CD4-positive, alpha-beta T cell (primary cell): ENCODE measurements at regions of chr3 and their contacts with region 1.

Region 1: GRCh38 chr3:49411968-49412631 is at the starts of genes RHOA and TCTA:
- DNase-seq: peak; percentile 97 to 100 (median 99)
- ATAC-seq: peak; percentile 84
- H3K4me3 ChIP-seq: peak within 1 kb of the TSS; percentile 75
- H3K4me3 Mint-ChIP-seq: peak within 1 kb of the TSS; percentile 96
- H3K27ac ChIP-seq: peak within 1 kb of the TSS; percentile 94 to 95
- H3K27ac Mint-ChIP-seq: peak within 1 kb of the TSS; percentile 97
- H3K4me1 ChIP-seq: peaks cover 75% of the 10 kb centered on the region
- H3K4me1 Mint-ChIP-seq: peaks cover 70% of the 10 kb centered on the region
- H3K27me3 ChIP-seq: no peaks in the 10 kb centered on the region
- H3K27me3 Mint-ChIP-seq: no peaks in the 10 kb centered on the region
- CTCF ChIP-seq: no peak
- total RNA-seq, gene RHOA: 256 to 271 TPM
- total RNA-seq, gene TCTA: 21.4 to 22.0 TPM

Region 2: DNA sequence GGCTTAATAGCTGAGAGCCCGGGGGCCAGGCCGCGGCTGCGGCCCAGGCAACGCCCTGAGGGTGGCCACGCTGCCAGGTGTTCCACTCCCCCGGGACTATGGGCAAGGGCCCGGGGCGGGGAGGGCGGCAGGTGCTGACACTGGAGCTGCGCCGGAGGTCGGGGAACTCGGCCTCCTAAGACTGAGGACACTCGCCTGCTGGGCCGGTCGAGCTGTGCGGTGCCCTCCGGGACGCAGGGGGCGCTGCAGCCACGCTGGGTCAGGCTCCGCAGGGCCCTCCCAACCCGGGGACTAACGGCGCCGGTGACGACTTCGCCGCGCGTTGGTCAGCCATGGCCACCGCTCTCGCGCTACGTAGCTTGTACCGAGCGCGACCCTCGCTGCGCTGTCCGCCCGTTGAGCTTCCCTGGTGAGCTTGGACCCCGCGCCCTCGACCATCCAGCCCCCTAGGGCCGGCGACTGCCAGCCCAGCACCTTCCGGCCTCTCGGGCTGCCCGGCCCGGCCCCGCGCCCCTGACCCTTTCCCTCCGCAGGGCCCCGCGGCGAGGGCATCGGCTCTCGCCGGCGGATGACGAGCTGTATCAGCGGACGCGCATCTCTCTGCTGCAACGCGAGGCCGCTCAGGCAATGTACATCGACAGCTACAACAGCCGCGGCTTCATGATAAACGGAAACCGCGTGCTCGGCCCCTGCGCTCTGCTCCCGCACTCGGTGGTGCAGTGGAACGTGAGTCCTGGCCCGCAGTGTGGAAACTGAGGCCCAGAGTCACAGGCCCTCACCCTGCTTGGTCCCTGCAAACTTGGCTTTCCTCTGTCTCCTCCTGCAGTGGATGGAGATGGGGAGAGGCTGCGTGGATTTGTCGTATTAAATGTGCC is 390.1 kb before region 1 on chr3 and contains the start of gene NDUFAF3:
- CTCF ChIA-PET with region 1: no interaction called
- POLR2A ChIA-PET with region 1: interaction called, 3 read pairs
- intact Hi-C with region 1: loop called in 1 of 2 experiments (anchors 5 kb)
- DNase-seq: peak; percentile 81 to 95 (median 90)
- ATAC-seq: peak; percentile 74
- H3K4me3 ChIP-seq: peak within 1 kb of the TSS; percentile 80
- H3K4me3 Mint-ChIP-seq: peak within 1 kb of the TSS; percentile 95
- H3K27ac ChIP-seq: peak within 1 kb of the TSS; percentile 92 to 98
- H3K27ac Mint-ChIP-seq: peak within 1 kb of the TSS; percentile 90
- H3K4me1 ChIP-seq: peaks cover 63% of the 10 kb centered on the region
- H3K4me1 Mint-ChIP-seq: peaks cover 50% of the 10 kb centered on the region
- H3K27me3 ChIP-seq: no peaks in the 10 kb centered on the region
- H3K27me3 Mint-ChIP-seq: no peaks in the 10 kb centered on the region
- CTCF ChIP-seq: peak; percentile 99
- total RNA-seq, gene NDUFAF3: 52.7 to 53.2 TPM

Region 3: DNA sequence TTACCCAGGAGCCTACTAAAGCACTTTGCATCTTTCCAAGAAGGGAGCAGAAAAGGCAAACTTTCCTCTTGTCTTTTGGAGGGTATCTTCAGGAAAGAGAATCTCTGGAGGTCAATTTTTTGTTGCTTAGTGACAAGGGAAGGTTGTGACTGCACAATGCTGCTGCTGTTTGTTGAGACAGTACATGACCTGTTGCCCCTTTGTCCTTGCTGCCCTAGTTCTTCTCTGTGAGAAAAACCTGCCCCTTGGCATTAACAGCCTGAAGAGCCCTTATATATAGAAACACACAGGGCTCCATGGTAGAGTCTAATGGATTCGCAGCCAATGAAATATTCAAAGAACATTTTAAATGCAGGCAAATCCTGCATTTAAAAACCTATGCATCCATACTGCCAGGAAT is 220.4 kb before region 1 on chr3:
- CTCF ChIA-PET with region 1: no interaction called
- POLR2A ChIA-PET with region 1: no interaction called
- intact Hi-C with region 1: no loop called
- DNase-seq: no peak
- ATAC-seq: no peak
- H3K4me3 ChIP-seq: no peak overlapping the region
- H3K4me3 Mint-ChIP-seq: no peak overlapping the region
- H3K27ac ChIP-seq: no peak overlapping the region
- H3K27ac Mint-ChIP-seq: no peak overlapping the region
- H3K4me1 ChIP-seq: no peaks in the 10 kb centered on the region
- H3K4me1 Mint-ChIP-seq: no peaks in the 10 kb centered on the region
- H3K27me3 ChIP-seq: no peaks in the 10 kb centered on the region
- H3K27me3 Mint-ChIP-seq: peaks cover 23% of the 10 kb centered on the region
- CTCF ChIP-seq: no peak

Region 4: GRCh38 chr3:49377483-49377882 is 34.6 kb before region 1 on chr3:
- CTCF ChIA-PET with region 1: no interaction called
- POLR2A ChIA-PET with region 1: interaction called, 3 read pairs
- intact Hi-C with region 1: loop called in 1 of 2 experiments (anchors 5 kb)
- DNase-seq: peak in 7 of 14 experiments; percentile 4 to 54 (median 21)
- ATAC-seq: peak; percentile 59
- H3K4me3 ChIP-seq: no peak overlapping the region
- H3K4me3 Mint-ChIP-seq: peak overlapping the region; percentile 25
- H3K27ac ChIP-seq: no peak overlapping the region
- H3K27ac Mint-ChIP-seq: peak overlapping the region; percentile 51
- H3K4me1 ChIP-seq: peaks cover 36% of the 10 kb centered on the region
- H3K4me1 Mint-ChIP-seq: peaks cover 45% of the 10 kb centered on the region
- H3K27me3 ChIP-seq: no peaks in the 10 kb centered on the region
- H3K27me3 Mint-ChIP-seq: no peaks in the 10 kb centered on the region
- CTCF ChIP-seq: no peak

Region 5: DNA sequence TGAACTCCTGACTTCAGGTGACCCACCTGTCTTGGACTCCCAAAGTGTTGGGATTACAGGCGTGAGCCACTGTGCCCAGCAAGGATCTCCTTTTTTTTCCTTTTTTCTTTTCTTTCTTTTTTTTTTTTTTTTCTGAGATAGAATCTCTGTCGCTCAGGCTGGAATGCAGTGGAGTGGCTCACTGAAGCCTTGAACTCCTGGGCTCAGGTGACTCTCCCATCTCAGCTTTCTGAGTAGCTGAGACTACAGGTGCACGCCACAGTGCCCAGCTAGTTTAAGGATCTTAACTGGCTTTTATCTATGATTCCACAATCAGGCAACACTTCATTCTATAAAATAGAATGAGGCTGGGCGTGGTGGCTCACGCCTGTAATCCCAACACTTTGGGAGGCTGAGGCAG is 33.3 kb after region 1 on chr3:
- CTCF ChIA-PET with region 1: interaction called, 45 read pairs
- POLR2A ChIA-PET with region 1: interaction called, 18 read pairs
- intact Hi-C with region 1: loop called (anchors 1 kb)
- DNase-seq: no peak
- ATAC-seq: no peak
- H3K4me3 ChIP-seq: no peak overlapping the region
- H3K4me3 Mint-ChIP-seq: no peak overlapping the region
- H3K27ac ChIP-seq: no peak overlapping the region
- H3K27ac Mint-ChIP-seq: no peak overlapping the region
- H3K4me1 ChIP-seq: peaks cover 21% of the 10 kb centered on the region
- H3K4me1 Mint-ChIP-seq: peaks cover 14% of the 10 kb centered on the region
- H3K27me3 ChIP-seq: no peaks in the 10 kb centered on the region
- H3K27me3 Mint-ChIP-seq: no peaks in the 10 kb centered on the region
- CTCF ChIP-seq: no peak

Region 6: GRCh38 chr3:49469936-49470713 is 58.0 kb after region 1 on chr3 and contains the start of gene DAG1:
- CTCF ChIA-PET with region 1: no interaction called
- POLR2A ChIA-PET with region 1: interaction called, 28 read pairs
- intact Hi-C with region 1: loop called in 1 of 2 experiments (anchors 1 kb)
- DNase-seq: peak; percentile 88 to 99 (median 94)
- ATAC-seq: peak; percentile 82
- H3K4me3 ChIP-seq: peak within 1 kb of the TSS; percentile 78
- H3K4me3 Mint-ChIP-seq: peak within 1 kb of the TSS; percentile 91
- H3K27ac ChIP-seq: peak within 1 kb of the TSS; percentile 86 to 88
- H3K27ac Mint-ChIP-seq: peak within 1 kb of the TSS; percentile 95
- H3K4me1 ChIP-seq: peaks cover 26% of the 10 kb centered on the region
- H3K4me1 Mint-ChIP-seq: peaks cover 23% of the 10 kb centered on the region
- H3K27me3 ChIP-seq: no peaks in the 10 kb centered on the region
- H3K27me3 Mint-ChIP-seq: no peaks in the 10 kb centered on the region
- CTCF ChIP-seq: no peak
- total RNA-seq, gene DAG1: 15.0 to 18.3 TPM

Region 7: GRCh38 chr3:49673715-49674496 is 261.8 kb after region 1 on chr3 and contains the start of gene APEH:
- CTCF ChIA-PET with region 1: no interaction called
- POLR2A ChIA-PET with region 1: no interaction called
- intact Hi-C with region 1: no loop called
- DNase-seq: peak; percentile 92 to 98 (median 96)
- ATAC-seq: peak; percentile 86
- H3K4me3 ChIP-seq: peak within 1 kb of the TSS; percentile 81
- H3K4me3 Mint-ChIP-seq: peak within 1 kb of the TSS; percentile 97
- H3K27ac ChIP-seq: peak within 1 kb of the TSS; percentile 91 to 96
- H3K27ac Mint-ChIP-seq: peak within 1 kb of the TSS; percentile 97
- H3K4me1 ChIP-seq: peaks cover 47% of the 10 kb centered on the region
- H3K4me1 Mint-ChIP-seq: peaks cover 50% of the 10 kb centered on the region
- H3K27me3 ChIP-seq: no peaks in the 10 kb centered on the region
- H3K27me3 Mint-ChIP-seq: no peaks in the 10 kb centered on the region
- CTCF ChIP-seq: no peak
- total RNA-seq, gene APEH: 44.3 to 45.5 TPM

Region 8: DNA sequence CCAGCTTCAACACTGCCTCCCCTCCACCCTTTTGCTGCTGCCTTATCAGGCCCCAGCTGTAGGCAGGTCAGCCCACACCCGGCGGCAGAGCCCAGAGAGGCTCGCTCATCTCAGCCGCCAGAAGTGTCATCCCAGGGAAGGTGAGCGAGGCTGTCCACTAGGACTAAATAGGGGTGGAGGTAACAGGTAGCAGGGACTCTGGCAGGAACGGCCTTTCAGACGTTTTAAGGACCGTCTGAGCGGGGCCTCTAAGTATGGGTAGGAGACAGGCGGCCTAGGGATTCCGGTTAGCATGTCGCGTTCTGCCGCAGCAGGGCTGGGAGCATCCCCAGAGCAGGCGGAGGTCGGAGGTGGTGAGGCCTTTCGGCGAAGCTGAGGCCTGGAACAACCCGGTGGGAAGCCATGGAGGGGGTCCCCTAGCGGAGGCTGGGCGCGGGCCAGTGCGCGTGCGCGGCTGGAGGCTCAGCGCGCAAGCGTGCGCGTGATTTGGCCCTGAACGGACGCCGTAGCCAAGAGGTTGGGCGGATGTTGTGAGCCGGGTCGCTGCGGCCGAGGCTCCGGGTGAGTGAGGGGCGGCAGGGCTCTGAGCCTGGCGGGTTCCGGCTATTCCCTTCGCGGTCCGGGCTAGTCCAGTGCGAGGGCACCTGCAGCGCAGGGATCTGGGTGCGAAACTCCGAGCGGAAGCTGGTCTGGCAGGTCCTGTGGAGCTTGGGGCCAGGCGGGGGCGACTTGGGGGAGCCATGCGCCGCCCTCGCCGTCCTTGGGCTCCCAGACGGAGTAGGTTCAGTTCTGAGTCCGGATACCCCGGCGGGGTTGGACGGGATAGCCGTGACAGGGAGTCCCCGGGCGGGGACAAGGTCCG is 277.2 kb after region 1 on chr3 and contains the starts of genes MST1 and RNF123:
- CTCF ChIA-PET with region 1: no interaction called
- POLR2A ChIA-PET with region 1: no interaction called
- intact Hi-C with region 1: no loop called
- DNase-seq: peak; percentile 87 to 97 (median 91)
- ATAC-seq: peak; percentile 80
- H3K4me3 ChIP-seq: peak within 1 kb of the TSS; percentile 98
- H3K4me3 Mint-ChIP-seq: peak within 1 kb of the TSS; percentile 97
- H3K27ac ChIP-seq: peak within 1 kb of the TSS; percentile 64 to 87
- H3K27ac Mint-ChIP-seq: peak within 1 kb of the TSS; percentile 91
- H3K4me1 ChIP-seq: peaks cover 49% of the 10 kb centered on the region
- H3K4me1 Mint-ChIP-seq: peaks cover 41% of the 10 kb centered on the region
- H3K27me3 ChIP-seq: no peaks in the 10 kb centered on the region
- H3K27me3 Mint-ChIP-seq: peaks cover 4% of the 10 kb centered on the region
- CTCF ChIP-seq: peak; percentile 55
- total RNA-seq, gene MST1: 7.8 TPM
- total RNA-seq, gene RNF123: 28.8 to 29.7 TPM